Activated naive CD4-positive, alpha-beta T cell treated with anti-CD3 and anti-CD28 coated beads for 36 hours (primary cell): ENCODE measurements at regions of chr5 and their contacts with region 1.

Region 1: GRCh38 chr5:133051580-133052332 is at the start of gene HSPA4:
- DNase-seq: peak; percentile 99
- H3K4me3 Mint-ChIP-seq: peak within 1 kb of the TSS; percentile 98
- H3K27ac Mint-ChIP-seq: peak within 1 kb of the TSS; percentile 99
- H3K4me1 Mint-ChIP-seq: peaks cover 42% of the 10 kb centered on the region
- H3K27me3 Mint-ChIP-seq: no peaks in the 10 kb centered on the region
- total RNA-seq, gene HSPA4: 180 to 190 TPM

Region 2: GRCh38 chr5:132437604-132438266 is 614.0 kb before region 1 on chr5:
- CTCF ChIA-PET with region 1: no interaction called
- intact Hi-C with region 1: loop called (anchors 10 kb)
- DNase-seq: peak; percentile 83
- H3K4me3 Mint-ChIP-seq: peak overlapping the region; percentile 46
- H3K27ac Mint-ChIP-seq: peak overlapping the region; percentile 81
- H3K4me1 Mint-ChIP-seq: peaks cover 83% of the 10 kb centered on the region
- H3K27me3 Mint-ChIP-seq: no peaks in the 10 kb centered on the region

Region 3: GRCh38 chr5:132556763-132557477 is 494.8 kb before region 1 on chr5 and contains the start of gene RAD50:
- CTCF ChIA-PET with region 1: no interaction called
- intact Hi-C with region 1: loop called (anchors 1 kb)
- DNase-seq: peak; percentile 96
- H3K4me3 Mint-ChIP-seq: peak within 1 kb of the TSS; percentile 98
- H3K27ac Mint-ChIP-seq: peak within 1 kb of the TSS; percentile 94
- H3K4me1 Mint-ChIP-seq: peaks cover 15% of the 10 kb centered on the region
- H3K27me3 Mint-ChIP-seq: no peaks in the 10 kb centered on the region
- total RNA-seq, gene RAD50: 39.1 to 42.4 TPM

Region 4: GRCh38 chr5:132829742-132830435 is 221.9 kb before region 1 on chr5:
- CTCF ChIA-PET with region 1: no interaction called
- intact Hi-C with region 1: loop called (anchors 1 kb)
- DNase-seq: peak; percentile 79
- H3K4me3 Mint-ChIP-seq: peak overlapping the region; percentile 79
- H3K27ac Mint-ChIP-seq: no peak overlapping the region
- H3K4me1 Mint-ChIP-seq: peaks cover 4% of the 10 kb centered on the region
- H3K27me3 Mint-ChIP-seq: peaks cover 50% of the 10 kb centered on the region

Region 5: DNA sequence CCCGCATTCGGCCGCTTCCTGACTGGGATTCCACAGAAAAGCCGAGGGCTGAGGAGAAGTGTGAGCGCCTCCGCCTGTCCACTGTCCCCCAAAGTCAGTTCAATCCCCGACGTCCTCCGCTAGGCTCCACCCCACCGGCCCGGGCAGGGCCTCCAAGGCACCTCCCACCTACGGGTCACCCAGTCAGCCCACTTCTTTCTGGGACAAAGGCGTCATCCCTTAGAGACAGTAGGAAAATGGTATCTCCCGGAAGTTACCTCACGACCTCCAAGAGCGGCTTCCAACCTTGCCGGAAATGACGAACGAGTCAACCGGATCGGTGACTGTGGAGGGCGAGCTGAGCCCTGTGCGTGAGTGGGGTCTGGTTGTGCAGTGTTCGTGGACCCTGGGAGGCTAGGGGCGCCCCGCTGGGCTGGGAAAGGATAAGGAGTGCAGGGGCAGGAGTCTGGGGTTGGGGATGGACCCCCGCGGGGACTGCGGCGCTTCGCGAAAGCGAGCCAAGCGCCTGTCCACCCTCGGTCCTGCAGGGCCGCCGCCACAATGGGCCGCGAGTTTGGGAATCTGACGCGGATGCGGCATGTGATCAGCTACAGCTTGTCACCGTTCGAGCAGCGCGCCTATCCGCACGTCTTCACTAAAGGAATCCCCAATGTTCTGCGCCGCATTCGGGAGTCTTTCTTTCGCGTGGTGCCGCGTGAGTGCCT is 185.3 kb before region 1 on chr5 and contains the starts of genes GDF9 and UQCRQ:
- CTCF ChIA-PET with region 1: no interaction called
- intact Hi-C with region 1: loop called (anchors 1 kb)
- DNase-seq: peak; percentile 96
- H3K4me3 Mint-ChIP-seq: peak within 1 kb of the TSS; percentile 99
- H3K27ac Mint-ChIP-seq: peak within 1 kb of the TSS; percentile 97
- H3K4me1 Mint-ChIP-seq: peaks cover 27% of the 10 kb centered on the region
- H3K27me3 Mint-ChIP-seq: no peaks in the 10 kb centered on the region
- total RNA-seq, gene GDF9: 0.64 to 1.2 TPM
- total RNA-seq, gene UQCRQ: 677 to 784 TPM

Region 6: DNA sequence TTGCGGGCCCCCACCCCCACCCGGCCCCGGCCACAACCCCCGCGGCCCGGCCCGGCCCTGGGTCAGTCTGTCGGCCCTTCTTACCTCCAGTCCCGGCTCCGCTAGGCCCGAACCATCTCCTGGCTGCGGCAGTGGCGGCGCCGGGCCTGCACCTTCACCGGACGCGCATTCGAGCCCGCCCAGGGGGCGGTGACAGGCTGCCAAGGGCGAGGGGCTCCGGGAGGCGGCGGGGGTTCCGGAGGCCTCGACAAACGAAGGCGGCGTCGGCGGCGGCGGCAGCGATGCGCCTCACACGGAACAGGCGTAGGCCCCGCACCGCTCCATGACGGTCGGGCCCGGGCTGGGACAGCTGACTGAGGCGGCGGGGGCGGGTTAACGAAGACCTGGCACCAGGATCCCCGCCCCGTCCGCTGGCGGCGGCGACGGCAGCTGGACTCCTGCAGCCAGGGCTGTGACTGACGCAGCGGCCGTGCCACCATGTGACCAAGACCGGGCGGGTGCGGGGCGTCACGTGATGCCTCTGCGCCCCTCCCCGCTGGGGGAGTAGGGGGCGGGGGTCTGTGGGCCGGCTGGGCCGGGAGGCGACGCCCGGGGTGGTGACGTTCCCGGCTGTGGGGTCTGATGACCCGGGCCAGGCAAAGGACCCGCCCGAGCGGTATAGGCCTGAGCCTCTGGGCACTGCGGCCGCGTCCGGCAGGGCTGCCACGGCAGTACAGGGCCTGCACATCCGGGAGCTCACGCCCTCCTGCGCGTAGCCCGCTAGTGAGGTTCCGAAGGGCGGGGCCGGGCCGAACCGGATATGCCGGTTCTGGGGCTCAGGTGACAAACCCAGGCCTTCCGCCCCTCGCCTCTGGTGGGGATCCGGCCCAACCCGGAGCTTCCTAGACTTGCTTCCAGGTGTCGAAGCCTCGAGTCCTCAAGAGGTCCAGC is 88.3 kb before region 1 on chr5 and contains the start of gene AFF4:
- CTCF ChIA-PET with region 1: no interaction called
- intact Hi-C with region 1: loop called (anchors 1 kb)
- DNase-seq: peak; percentile 86
- H3K4me3 Mint-ChIP-seq: peak within 1 kb of the TSS; percentile 95
- H3K27ac Mint-ChIP-seq: peak within 1 kb of the TSS; percentile 97
- H3K4me1 Mint-ChIP-seq: peaks cover 33% of the 10 kb centered on the region
- H3K27me3 Mint-ChIP-seq: no peaks in the 10 kb centered on the region
- total RNA-seq, gene AFF4: 13.6 to 14.2 TPM

Region 7: DNA sequence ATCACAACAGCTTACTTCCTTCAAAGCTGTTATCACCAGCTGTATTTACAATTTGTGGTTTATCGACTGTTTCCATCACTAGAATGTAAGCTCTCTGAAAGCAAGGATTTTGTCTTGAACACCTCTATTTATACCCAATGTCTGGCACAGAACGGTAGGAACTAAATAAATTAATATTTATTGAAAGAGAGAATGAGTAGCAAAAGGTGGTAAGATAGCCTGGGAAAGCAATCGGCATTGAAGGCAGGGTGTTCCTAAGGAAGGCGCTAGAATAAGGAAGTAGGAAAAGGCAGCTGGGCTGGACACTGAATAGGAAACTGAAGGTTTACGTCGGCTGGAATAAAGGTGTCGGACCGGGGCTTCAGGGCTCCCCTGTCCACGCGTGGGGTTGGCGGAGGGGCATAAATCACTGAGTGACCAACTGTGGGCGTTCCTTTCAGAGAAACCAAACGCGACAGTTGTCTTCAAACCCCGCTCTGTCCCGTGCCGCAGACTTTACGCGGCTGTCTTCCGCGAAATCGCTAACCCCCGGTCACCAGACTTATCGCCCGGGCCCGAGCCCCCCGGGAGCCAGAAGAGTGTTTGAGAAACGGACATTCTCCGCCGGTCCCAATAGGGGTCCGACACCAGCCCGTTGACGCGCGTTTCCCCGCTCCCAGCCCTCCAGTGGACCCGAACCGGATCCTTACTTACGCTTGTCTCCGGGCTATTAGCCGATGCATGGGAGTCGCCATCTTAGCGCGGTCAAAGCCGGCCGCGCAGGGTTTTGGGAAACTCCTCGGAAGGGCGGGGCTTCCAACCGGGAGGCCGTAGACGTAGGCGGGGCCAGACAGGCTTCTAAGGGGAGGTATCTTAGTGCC is 25.7 kb before region 1 on chr5 and contains the start of gene ZCCHC10:
- CTCF ChIA-PET with region 1: no interaction called
- intact Hi-C with region 1: loop called (anchors 1 kb)
- DNase-seq: peak; percentile 96
- H3K4me3 Mint-ChIP-seq: peak within 1 kb of the TSS; percentile 87
- H3K27ac Mint-ChIP-seq: peak within 1 kb of the TSS; percentile 87
- H3K4me1 Mint-ChIP-seq: peaks cover 18% of the 10 kb centered on the region
- H3K27me3 Mint-ChIP-seq: no peaks in the 10 kb centered on the region
- total RNA-seq, gene ZCCHC10: 23.5 to 27.0 TPM